Heart left ventricle (tissue), 16 donors: ENCODE measurements at regions of chr21 and their contacts with region 1.

Region 1: GRCh38 chr21:40166291-40166850 is 299.1 kb downstream of the PCP4 start:
- DNase-seq: no peak
- ATAC-seq: no peak
- H3K4me3 ChIP-seq: no peak overlapping the region
- H3K27ac ChIP-seq: no peak overlapping the region
- H3K4me1 ChIP-seq: no peaks in the 10 kb centered on the region
- H3K27me3 ChIP-seq: no peaks in the 10 kb centered on the region
- CTCF ChIP-seq: no peak
- POLR2A ChIP-seq: no peak

Region 2: DNA sequence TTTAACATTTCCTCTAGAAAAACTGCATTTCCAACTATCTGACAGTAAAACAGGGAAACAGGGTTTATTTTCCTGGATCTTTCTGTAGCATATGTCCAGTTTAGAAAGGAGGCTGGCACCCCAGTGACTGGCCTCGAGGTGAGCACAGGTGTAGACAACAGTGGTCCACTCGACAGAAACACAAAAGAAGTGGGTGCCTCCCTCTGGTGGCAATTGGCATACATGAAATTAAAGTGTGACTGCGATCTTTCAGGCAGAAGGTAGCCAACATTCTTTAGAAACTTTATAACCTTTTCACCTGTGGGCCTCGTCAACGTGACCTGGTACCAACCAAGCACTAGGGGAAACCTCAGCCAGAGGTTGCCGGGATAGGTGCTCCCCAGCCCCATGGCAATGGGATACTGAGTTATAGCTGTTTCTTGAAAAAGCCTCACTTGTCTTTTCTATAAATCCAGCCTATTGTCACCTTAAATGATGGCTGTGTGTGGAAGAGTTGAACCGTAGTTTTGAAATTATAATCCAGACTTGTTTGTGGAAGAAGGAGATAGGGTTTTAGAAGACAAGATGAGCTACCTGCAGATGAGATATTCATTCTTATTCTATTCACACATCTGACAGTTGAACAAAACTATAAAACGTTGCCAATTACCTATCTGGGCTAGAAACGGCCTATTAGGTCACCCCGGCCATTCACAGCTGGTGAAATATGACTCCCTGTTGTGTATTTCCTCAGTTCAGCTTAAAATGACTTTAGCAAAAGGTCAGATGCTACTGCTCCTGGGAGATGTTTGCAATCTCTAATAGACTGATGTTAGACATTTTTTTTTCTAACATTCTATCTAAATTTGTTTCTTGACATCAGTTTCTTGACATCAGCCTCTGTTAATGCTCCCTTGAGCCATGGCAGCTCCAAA is 254.8 kb before region 1 on chr21:
- intact Hi-C with region 1: no loop called
- DNase-seq: no peak
- ATAC-seq: no peak
- H3K4me3 ChIP-seq: no peak overlapping the region
- H3K27ac ChIP-seq: no peak overlapping the region
- H3K4me1 ChIP-seq: peaks cover 0 to 3% (median 0%) of the 10 kb centered on the region in 12 donors
- H3K27me3 ChIP-seq: no peaks in the 10 kb centered on the region
- CTCF ChIP-seq: peak in 4 of 12 donors; percentile 7 to 20 (median 17)
- POLR2A ChIP-seq: no peak

Region 3: DNA sequence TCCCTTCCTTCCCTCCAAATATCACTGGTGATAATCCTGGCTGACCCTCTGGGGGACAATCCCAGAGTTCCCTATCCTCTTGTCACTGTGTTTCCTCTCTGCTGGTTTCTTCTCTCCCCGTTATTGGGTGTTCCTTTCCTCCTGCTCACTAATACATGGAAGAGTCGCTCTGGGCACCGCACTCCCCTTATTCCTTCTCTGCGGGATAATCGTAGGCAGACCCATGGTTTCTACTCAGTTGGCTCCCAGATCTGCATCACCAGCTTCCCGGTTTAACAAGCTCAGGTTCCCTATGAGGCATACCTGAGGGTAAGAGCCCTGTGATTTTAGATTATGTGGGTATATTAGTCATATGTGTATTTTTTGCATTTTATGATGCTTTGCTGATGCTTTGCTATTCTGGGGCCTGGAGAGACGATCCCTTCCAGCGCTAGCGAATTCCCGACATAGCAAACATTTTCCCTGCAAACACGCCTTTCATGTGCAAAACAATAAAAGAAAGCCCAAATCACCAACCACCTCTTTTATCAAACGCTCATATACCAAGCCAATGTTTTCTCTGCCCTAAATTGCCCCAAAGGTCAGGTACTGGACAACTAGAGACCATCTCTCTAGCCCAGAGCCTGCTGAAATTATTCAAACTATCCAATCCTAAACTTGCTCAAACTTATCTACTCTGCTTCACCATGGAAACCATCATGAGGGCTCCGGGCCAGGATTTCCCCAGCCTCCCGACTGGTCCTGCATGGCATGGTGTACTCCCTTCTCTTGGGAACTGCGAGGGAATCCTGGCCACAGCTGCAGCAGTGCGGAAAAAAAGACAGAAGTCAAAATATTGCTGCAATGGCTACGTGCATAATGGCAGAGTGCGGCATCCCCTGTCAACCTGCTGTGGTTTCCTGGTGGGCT is 214.9 kb before region 1 on chr21:
- intact Hi-C with region 1: no loop called
- DNase-seq: no peak
- ATAC-seq: no peak
- H3K4me3 ChIP-seq: no peak overlapping the region
- H3K27ac ChIP-seq: no peak overlapping the region
- H3K4me1 ChIP-seq: no peaks in the 10 kb centered on the region
- H3K27me3 ChIP-seq: peaks cover 0 to 3% (median 0%) of the 10 kb centered on the region in 9 donors
- CTCF ChIP-seq: no peak
- POLR2A ChIP-seq: no peak

Region 4: GRCh38 chr21:40331172-40331571 is 164.8 kb after region 1 on chr21:
- intact Hi-C with region 1: loop called in 1 of 10 experiments (anchors 5 kb)
- DNase-seq: peak in 3 of 5 donors; percentile 16 to 57 (median 30)
- ATAC-seq: peak; percentile 50 to 93 (median 74)
- H3K4me3 ChIP-seq: no peak overlapping the region
- H3K27ac ChIP-seq: peak overlapping the region in 1 of 12 donors; percentile 9
- H3K4me1 ChIP-seq: peaks cover 0 to 6% (median 0%) of the 10 kb centered on the region in 12 donors
- H3K27me3 ChIP-seq: no peaks in the 10 kb centered on the region
- CTCF ChIP-seq: no peak
- POLR2A ChIP-seq: no peak